Activated CD4-positive, alpha-beta T cell treated with anti-CD3 and anti-CD28 coated beads, Interleukin-2, amount 10 ng/mL, durations not matched to agents 24 days and 14 days (primary cell): ENCODE measurements at regions of chrX and their contacts with region 1.

Region 1: DNA sequence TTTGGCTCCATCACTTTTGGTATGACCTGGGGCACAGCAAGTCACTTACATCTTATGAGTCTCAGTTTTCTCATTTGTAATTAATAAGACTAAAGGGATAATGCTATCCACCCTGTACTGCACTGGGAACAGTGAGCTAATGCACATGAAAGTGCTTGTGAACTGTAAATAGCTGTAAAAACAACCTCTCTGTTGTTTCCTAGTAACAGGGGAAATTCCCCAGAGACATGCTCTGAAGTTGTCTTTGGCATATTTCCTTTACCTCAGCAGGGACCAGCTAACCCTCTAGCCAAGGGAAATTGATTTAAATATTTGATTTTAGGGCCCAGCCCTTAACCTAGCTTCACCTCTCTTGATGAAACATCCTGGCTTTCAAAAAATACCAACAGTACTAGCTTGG is 6.1 kb upstream of the CYSLTR1 start:
- DNase-seq: peak; percentile 79
- H3K4me3 Mint-ChIP-seq: peak overlapping the region; percentile 44
- H3K27ac Mint-ChIP-seq: peak overlapping the region; percentile 91
- H3K4me1 Mint-ChIP-seq: peaks cover 48% of the 10 kb centered on the region
- H3K27me3 Mint-ChIP-seq: no peaks in the 10 kb centered on the region

Region 2: DNA sequence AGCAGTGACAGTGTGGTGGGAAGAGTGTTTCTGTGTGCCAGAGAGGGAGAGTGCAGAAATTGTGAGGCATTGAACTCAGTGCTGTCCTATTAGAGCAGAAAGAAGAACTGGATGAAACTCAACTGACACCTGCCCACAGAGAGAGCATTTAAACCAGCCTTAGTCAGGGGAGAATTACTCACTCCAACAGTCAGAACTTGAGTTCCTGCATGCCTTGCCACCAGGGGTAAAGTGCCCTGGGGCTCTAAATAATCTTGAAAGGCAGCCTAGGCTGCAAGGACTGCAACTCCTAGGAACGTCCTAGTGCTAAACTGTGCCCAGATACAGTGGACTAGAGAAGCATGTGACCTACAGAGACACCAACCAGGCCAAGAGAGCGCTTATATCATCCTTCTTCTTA is 18.9 kb before region 1 on chrX:
- intact Hi-C with region 1: loop called (anchors 1 kb)
- DNase-seq: no peak
- H3K4me3 Mint-ChIP-seq: peak overlapping the region; percentile 44
- H3K27ac Mint-ChIP-seq: peak overlapping the region; percentile 87
- H3K4me1 Mint-ChIP-seq: peaks cover 49% of the 10 kb centered on the region
- H3K27me3 Mint-ChIP-seq: no peaks in the 10 kb centered on the region

Region 3: DNA sequence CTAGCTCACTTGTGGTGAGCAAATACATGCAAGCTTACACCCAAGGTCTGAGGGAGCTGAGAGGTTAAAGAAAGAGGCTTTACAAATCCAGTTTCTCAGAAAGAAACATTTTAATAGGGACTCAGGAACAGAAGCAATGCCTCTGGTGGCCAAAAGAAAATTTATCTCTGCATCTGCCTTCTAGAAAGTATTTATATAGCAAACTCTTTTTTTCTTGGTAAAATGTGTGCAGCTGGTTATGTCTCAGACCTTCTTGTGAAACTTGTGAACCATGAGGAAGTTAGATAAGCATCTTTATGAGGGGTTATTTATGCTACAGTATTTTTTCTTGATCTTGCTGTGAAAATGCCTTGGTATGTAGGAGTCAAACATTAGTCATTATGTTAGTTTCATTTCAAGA is 42.4 kb after region 1 on chrX:
- intact Hi-C with region 1: loop called (anchors 1 kb)
- DNase-seq: peak; percentile 58
- H3K4me3 Mint-ChIP-seq: no peak overlapping the region
- H3K27ac Mint-ChIP-seq: peak overlapping the region; percentile 58
- H3K4me1 Mint-ChIP-seq: peaks cover 23% of the 10 kb centered on the region
- H3K27me3 Mint-ChIP-seq: no peaks in the 10 kb centered on the region